ENCODE measurements at regions of chr10 and their contacts with region 1.

Region 1: DNA sequence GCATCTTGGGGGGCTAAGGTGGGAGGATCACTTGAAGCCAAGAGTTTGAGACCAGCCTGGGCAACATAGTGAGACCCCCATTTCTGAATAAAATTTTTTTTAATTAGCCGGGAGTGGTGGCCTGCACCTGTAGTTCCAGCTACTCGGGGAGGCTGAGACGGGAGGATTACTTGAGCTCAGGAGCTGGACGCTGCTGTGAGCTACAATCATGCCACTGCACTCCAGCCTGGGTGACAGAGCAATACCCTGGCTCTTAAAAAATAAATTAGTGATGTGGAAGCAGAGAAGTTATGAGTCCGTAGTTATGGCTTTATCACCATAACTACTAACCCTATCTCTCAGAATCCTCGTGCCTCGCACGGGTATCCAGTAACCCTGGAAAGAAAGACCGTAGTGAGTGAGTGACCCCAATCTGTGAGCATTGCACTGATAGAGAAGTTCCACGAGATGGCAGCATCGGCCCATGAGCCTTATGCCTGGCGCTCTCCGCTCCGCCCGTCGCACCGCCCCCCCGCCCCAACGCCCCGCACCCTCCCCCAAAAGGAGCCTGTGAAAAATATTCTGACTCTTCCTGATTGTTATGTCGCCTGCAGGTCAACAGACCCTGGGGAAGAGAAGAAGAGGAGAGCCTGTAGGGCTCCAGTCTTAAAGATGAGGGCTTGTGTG is 4.9 kb upstream of the SLC29A3 start:
- DNase-seq: peak in 1 of 2 donors; percentile 35
- ATAC-seq: peak; percentile 54 to 62
- H3K4me3 ChIP-seq: peak overlapping the region in 1 of 4 donors; percentile 25
- H3K27ac ChIP-seq: peak overlapping the region in 2 of 4 donors; percentile 18 to 59
- H3K4me1 ChIP-seq: peaks cover 11% of the 10 kb centered on the region in 2 donors
- H3K27me3 ChIP-seq: no peaks in the 10 kb centered on the region
- CTCF ChIP-seq: peak; percentile 39 to 96 (median 83)
- POLR2A ChIP-seq: no peak

Region 2: DNA sequence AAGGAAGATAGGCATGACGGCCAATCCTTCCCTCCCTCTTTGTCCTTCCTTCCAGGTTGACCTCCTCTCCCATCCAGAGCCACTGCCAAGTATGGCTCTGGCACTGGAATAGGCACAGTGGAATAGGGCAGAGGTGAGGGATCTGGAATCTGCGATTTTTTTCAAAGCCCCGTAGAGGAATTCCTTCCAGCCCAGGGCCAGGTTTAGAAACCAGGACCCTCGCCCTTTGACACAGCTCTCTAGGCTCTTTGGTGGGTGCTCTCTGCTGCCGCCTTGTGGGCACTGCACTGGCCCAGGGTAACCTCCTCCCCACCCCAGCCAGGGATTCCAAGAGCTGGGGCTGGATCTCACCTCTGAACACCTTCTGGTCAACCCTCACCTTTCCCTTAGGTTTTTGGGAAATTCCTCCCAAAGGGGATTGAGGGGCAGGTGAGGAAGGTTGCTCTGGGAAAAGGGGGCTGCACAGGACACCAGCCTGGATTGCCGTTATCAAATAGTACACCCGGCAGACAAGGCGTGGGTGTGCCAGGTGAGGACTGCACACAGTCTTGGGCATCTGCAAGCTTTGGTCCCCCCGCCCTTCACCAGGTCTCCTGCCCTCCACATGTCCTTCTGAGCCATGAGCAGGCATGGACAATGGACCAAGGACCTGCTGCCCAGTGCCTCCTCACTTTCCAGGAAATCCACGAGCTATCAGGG is 382.6 kb after region 1 on chr10:
- in situ Hi-C with region 1: loop called in 2 of 4 experiments (anchors 10 kb)
- intact Hi-C with region 1: loop called (anchors 5 kb)
- DNase-seq: peak; percentile 24 to 30
- ATAC-seq: peak; percentile 46 to 66
- H3K4me3 ChIP-seq: no peak overlapping the region
- H3K27ac ChIP-seq: no peak overlapping the region
- H3K4me1 ChIP-seq: peaks cover 0 to 14% of the 10 kb centered on the region in 2 donors
- H3K27me3 ChIP-seq: no peaks in the 10 kb centered on the region
- CTCF ChIP-seq: peak; percentile 70 to 89 (median 82)
- POLR2A ChIP-seq: no peak

Region 3: DNA sequence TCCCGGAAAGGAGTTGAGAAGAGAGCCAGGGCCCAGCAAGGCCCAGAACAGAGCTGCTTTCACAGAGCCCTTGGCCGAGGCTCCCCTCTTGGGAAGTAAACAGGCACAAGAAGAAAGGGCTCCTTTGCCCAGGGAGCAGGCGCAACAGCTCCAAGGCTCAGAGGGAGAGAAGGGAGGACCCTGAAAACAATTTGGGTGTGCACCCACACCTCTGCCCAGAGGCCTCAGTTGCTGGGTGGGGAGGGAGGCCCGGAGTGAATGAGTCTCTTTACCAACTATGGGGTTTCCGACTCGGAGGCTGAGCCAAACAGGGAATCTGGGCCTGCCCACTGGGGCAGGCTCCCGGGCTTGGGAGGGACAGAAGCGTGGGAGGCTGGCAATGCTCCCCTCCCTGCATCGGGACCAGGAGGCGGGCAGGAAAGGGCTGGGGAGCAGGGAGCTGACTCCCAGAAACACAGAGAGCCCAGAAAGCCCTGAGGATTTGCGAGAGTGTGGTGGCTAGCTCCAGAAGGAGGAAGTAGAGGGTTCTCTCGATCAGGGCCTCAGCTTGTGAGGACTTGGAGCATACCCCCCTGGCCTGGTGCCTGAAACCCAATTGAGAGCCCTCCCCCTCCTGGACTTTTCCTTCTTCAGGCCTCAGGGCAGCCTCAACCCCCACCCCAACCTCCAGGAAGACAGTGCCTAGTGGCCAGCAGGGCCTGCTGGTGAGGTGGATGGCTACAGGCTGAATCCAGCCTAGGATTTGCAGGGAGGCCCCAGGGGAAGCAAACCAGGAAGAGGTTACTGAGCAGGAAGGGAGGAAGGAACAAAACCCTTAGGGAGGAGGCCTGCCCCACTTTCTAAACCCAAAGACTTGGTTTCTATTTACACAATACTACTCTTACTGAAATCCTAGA is 399.2 kb after region 1 on chr10:
- in situ Hi-C with region 1: loop called in 2 of 4 experiments (anchors 10 kb)
- intact Hi-C with region 1: loop called (anchors 5 kb)
- DNase-seq: peak; percentile 35 to 72
- ATAC-seq: peak; percentile 59 to 68
- H3K4me3 ChIP-seq: no peak overlapping the region
- H3K27ac ChIP-seq: peak overlapping the region; percentile 71 to 81 (median 80)
- H3K4me1 ChIP-seq: peaks cover 26 to 31% of the 10 kb centered on the region in 2 donors
- H3K27me3 ChIP-seq: no peaks in the 10 kb centered on the region
- CTCF ChIP-seq: no peak
- POLR2A ChIP-seq: peak in 1 of 2 donors; percentile 4